Thyroid gland (tissue), 4 donors: ENCODE measurements at regions of chr10 and their contacts with region 1.

Region 1: DNA sequence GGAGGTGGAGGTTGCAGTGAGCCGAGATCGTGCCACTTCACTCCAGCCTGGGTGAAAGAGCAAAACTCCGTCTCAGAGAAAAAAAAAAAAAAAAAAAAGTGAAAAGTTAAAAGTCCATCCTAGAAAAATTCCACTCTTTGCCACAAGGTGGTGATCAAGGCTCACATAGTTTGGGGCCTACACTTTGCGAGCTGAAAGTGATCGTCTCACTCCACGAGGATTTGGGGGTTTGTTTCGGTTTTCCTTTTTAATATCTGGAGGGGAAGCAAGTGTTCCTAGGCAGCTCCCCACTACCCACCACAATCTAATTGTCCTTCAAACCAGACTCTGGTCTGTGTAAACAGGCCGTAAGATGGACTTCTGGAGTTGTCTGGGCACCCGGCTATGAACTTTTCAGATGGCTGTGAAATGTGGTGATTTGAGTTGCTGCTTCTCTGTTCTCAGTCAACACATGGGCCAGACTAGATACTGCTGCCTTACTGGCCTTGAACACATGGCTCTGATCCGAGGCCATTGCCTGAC is 27.1 kb downstream of the PRLHR start:
- DNase-seq: peak; percentile 22 to 42
- H3K4me3 ChIP-seq: no peak overlapping the region
- H3K27ac ChIP-seq: no peak overlapping the region
- H3K4me1 ChIP-seq: no peaks in the 10 kb centered on the region
- H3K27me3 ChIP-seq: no peaks in the 10 kb centered on the region
- CTCF ChIP-seq: peak; percentile 50 to 98 (median 76)
- POLR2A ChIP-seq: no peak

Region 2: DNA sequence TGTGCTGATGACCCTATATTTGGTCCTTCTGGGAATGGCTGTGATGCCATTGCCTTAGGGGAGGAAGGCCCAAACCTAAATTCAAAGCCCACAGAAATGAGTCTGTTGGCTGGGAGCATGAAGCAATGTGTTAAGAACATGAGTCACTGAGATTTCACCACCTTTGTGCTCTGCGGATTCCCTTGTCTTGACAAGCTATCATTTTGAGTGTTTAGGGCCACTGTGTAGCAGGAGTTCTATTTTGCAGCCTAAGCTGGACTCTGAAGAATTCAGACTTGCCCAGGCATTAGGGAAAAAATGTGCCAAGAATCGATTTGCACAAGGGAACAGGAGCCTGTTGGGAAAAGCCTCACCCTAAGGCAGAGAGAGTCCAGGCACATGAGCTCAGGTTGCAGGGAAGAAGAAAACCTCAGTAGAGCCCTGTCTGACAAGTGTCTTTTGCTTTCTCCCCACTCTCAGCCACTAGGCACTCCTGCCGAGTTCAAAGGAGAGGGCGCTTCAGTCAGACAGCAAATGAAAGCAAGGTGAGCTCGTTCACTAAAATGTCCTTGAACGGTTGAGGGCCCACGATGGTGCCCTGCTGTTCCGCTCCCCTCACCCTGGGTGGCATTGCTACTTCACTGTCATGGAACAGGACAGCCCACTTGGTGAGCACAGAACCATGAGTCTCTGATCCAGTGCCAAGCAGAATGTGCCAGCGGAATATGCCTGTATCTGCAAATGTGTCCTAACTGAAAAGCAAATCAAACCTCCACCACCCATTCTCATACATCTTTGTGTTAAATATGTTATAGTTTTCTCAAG is 66.5 kb before region 1 on chr10:
- intact Hi-C with region 1: no loop called
- DNase-seq: peak; percentile 95
- H3K4me3 ChIP-seq: no peak overlapping the region
- H3K27ac ChIP-seq: no peak overlapping the region
- H3K4me1 ChIP-seq: peaks cover 12 to 18% of the 10 kb centered on the region in 2 donors
- H3K27me3 ChIP-seq: no peaks in the 10 kb centered on the region
- CTCF ChIP-seq: no peak
- POLR2A ChIP-seq: no peak

Region 3: GRCh38 chr10:118698421-118698820 is 130.0 kb after region 1 on chr10:
- intact Hi-C with region 1: no loop called
- DNase-seq: no peak
- H3K4me3 ChIP-seq: no peak overlapping the region
- H3K27ac ChIP-seq: no peak overlapping the region
- H3K4me1 ChIP-seq: peaks cover 11 to 22% of the 10 kb centered on the region in 2 donors
- H3K27me3 ChIP-seq: no peaks in the 10 kb centered on the region
- CTCF ChIP-seq: no peak
- POLR2A ChIP-seq: no peak

Region 4: DNA sequence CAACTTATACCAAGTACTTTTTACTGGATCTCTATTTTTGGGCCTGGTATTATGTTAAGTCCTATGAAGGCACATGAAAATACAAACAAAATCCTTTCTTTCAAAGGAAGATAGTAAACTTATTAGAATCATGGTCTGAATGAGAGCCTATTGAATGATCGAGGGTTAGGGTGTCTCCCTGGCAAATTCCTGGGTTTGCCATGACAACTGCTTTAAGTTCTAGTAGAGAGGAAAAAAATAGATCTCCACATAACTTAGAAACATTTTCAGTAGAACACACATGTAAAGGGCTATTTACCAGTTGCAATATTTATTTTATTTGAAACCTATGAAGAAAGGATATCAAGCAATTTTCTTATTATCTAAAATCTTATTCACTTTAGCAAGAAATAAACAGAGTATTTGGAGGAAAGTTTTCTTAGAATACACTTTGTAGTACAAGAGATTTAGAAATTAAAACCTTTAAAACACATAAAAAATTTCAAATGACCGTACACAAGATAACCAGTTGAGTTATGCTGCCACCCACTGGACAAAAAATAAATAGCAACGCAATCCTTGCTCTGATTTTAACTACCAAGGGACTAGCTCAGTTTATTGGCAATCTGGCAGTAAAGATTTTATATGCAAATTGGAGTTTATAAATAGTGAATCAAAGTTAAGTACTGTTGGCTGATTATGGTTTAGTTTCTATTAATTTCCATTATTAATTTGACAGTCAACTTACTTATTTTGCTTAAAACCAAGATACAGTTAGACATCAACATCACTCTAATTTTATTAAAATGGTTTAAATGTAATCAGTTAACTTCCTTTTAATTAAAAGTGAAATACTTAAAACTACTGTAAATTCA is 152.5 kb after region 1 on chr10:
- intact Hi-C with region 1: loop called (anchors 5 kb)
- DNase-seq: peak; percentile 41 to 51
- H3K4me3 ChIP-seq: no peak overlapping the region
- H3K27ac ChIP-seq: no peak overlapping the region
- H3K4me1 ChIP-seq: peaks cover 4 to 5% of the 10 kb centered on the region in 2 donors
- H3K27me3 ChIP-seq: no peaks in the 10 kb centered on the region
- CTCF ChIP-seq: peak; percentile 56 to 86 (median 79)
- POLR2A ChIP-seq: no peak

Region 5: DNA sequence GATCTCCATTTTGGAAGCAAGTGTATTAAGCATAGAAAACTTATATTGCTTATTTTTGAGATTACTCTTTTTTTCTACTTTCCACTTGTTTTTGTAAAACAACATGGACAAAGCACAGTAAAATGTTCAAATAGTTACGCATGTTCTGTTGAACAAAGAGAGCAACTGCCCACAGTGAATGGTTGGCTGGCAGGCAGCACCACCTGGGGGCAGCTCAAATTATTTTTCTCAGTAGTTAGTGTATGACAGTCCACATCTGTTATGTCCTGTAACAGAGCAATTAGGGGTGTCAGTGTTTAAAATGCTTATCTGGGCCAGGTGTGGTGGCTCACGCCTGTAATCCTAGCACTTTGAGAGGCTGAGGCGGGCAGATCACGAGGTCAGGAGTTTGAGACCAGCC is 232.5 kb after region 1 on chr10:
- intact Hi-C with region 1: loop called (anchors 10 kb)
- DNase-seq: peak; percentile 55 to 65
- H3K4me3 ChIP-seq: no peak overlapping the region
- H3K27ac ChIP-seq: no peak overlapping the region
- H3K4me1 ChIP-seq: no peaks in the 10 kb centered on the region
- H3K27me3 ChIP-seq: no peaks in the 10 kb centered on the region
- CTCF ChIP-seq: peak in 5 of 6 experiments; percentile 50 to 71 (median 60)
- POLR2A ChIP-seq: no peak